ENCODE measurements at regions of chr20 and their contacts with region 1.

Region 1: GRCh38 chr20:1437235-1437904 is 29.3 kb downstream of the NSFL1C start:
- DNase-seq: peak; percentile 85
- ATAC-seq: peak; percentile 73

Region 2: GRCh38 chr20:1150218-1150617 is 287.2 kb before region 1 on chr20:
- intact Hi-C with region 1: no loop called
- DNase-seq: no peak
- ATAC-seq: no peak

Region 3: DNA sequence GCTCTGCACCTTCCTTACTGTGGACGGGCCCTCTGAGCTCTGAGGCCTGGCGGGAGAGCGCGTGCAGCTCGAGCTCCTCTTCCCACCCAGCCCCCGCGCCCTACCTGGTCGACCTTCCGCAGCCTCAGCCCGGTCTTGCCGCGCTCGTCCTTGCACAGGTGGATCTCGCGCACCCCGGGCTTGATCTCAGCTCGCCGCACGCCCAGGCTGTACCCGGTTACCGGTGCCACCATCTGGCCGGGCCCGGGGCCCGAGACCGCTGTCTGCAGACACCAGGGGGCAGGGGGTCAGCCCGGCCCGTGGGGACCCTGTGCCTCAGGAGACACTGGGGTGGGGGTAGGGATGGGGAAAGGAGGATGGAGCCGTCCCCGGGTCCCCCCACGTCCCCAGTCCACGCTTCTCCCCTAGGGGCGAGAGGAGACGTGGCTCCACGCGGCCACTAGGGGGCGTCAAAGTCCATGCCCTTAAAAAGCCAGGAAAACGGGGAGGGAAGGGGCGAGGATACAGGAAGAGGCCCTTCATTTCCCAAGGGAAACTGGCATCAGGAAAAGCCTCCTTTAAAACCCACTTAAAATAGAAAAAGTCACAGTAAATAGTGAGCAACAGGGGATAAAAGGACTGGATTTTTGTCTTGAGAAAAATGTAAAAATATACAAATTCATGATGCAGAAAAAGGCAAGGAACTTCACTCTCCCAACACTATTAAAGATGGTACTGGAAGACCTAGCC is 124.0 kb before region 1 on chr20:
- intact Hi-C with region 1: loop called (anchors 2 kb)
- DNase-seq: peak; percentile 83
- ATAC-seq: peak; percentile 96

Region 4: GRCh38 chr20:1391640-1392498 is 45.5 kb before region 1 on chr20:
- intact Hi-C with region 1: no loop called
- DNase-seq: peak; percentile 47
- ATAC-seq: peak; percentile 6

Region 5: DNA sequence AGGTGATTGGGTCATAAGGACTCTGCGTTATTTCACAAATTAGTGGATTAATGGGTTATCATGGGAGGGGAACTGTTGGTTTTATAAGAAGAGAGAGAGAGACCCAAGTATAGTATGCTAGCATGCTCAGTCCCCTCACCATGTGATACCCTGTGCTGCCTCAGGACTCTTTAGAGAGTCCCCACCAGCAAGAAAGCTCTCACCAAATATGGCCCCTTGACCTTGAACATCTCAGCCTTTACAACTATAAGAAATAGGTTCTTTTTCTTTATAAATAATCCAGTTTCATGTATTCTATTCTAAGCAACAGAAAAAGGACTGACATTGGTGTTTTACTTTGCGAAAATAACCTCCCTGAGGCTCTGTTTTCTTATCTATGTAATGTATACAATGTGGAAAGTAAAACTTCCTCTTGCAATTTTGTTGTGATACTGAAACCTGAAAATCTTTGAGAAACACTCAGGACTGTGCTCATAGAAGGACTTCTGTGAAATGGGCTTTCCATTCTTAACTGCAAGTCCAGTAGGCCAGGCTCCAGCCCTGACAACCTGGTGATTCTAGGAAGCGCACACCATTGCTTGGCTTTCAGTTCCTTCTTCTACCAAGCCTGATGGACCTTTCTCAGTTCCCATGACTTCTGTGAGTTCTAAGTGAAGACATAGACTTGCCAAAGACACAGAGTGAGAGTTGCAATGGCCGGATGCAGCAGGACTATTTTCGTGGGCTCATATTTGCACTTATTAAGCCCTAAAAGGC is 98.2 kb after region 1 on chr20:
- intact Hi-C with region 1: no loop called
- DNase-seq: peak; percentile 41
- ATAC-seq: peak; percentile 53

Measured in Right ventricle myocardium superior (tissue), 1 donor.